Pancreas (tissue), 10 donors: ENCODE measurements at regions of chr10 and their contacts with region 1.

Region 1: GRCh38 chr10:17430647-17431355 is 23.6 kb downstream of the ST8SIA6 start:
- DNase-seq: peak in 5 of 6 donors; percentile 57 to 81 (median 68)
- ATAC-seq: peak; percentile 82 to 99 (median 92)
- H3K4me3 ChIP-seq: no peak overlapping the region
- H3K27ac ChIP-seq: no peak overlapping the region
- H3K4me1 ChIP-seq: no peaks in the 10 kb centered on the region
- H3K27me3 ChIP-seq: no peaks in the 10 kb centered on the region
- CTCF ChIP-seq: peak; percentile 80 to 89 (median 84)

Region 2: DNA sequence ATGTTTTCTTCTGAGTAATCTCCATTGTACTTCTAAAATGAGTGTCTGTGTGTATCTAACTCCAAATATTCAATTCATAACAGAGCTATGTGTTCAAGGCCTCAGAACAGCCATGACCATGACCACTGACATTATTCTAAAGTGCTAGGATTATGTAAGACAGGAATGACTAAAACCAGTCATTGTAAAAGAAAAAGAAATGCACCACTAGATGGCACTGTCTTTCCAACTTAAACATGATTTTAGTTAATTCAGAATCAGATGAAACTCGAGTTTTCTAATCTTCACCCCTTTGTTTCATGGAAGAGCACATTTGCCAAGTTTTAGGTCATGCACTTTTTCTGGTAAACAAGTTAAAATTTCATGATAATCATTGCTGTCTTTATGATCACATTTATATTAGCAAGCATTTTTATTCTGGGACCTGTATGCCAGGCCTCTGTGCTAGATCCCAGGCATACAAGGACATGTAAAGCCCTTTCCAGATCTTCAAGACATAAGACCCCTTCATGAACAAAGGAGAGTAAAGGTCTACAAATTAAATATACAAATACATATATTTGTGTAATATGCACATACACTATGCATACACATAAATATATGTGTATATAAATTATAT is 587.4 kb before region 1 on chr10:
- intact Hi-C with region 1: loop called in 1 of 3 experiments (anchors 10 kb)
- DNase-seq: no peak
- ATAC-seq: peak; percentile 77 to 99 (median 92)
- H3K4me3 ChIP-seq: no peak overlapping the region
- H3K27ac ChIP-seq: no peak overlapping the region
- H3K4me1 ChIP-seq: no peaks in the 10 kb centered on the region
- H3K27me3 ChIP-seq: no peaks in the 10 kb centered on the region
- CTCF ChIP-seq: peak; percentile 49 to 69 (median 58)

Region 3: DNA sequence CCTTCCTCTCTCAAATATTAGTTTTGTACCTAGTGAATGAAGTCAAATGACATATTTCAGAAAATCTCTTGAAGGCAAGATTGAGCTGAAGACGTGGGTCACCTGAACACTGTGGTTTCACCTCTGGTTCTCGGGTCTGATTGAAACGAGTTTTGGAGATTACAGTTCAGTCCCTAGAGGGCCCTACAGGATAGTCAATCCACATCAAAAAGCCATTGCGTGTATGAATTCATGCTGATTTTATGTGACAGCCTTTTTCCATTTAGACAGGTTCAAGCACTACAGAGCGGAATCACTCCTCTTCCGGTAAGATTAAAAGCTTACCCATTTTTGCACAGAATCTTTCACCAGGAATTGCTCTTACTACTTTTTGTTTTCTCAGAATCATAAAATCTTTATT is 140.6 kb before region 1 on chr10:
- intact Hi-C with region 1: loop called (anchors 5 to 10 kb)
- DNase-seq: peak in 1 of 6 donors; percentile 27
- ATAC-seq: peak; percentile 88 to 99 (median 96)
- H3K4me3 ChIP-seq: peak overlapping the region in 1 of 4 donors; percentile 22
- H3K27ac ChIP-seq: no peak overlapping the region
- H3K4me1 ChIP-seq: no peaks in the 10 kb centered on the region
- H3K27me3 ChIP-seq: peaks cover 0 to 5% (median 0%) of the 10 kb centered on the region in 4 donors
- CTCF ChIP-seq: peak in 3 of 4 donors; percentile 23 to 28 (median 24)

Region 4: DNA sequence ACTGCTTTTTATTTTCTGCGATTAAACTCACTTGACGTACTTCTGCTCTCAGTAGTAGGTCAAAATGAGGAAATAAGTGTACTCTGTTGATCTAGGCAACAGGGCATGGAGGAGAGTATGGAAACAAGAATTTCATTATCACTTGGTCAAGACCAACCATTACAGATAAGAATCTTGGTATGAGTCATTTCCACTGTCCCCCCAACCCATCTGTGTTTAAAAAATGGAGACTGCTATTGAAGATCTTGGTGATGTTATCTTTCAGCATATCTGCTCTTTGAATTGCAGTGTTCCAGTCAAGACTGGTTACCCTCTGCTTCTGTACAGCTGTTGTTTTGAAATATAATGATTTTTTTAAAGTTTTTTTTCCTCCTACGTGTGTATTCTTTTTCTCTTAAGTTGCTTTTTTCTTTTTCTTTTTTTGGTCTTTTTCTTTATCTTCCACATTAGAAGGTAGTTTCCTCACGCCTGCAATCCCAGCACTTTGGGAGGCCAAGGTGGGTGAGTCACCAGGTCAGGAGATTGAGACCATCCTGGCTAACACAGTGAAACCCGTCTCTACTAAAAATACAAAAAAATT is 224.9 kb after region 1 on chr10:
- intact Hi-C with region 1: no loop called
- DNase-seq: no peak
- ATAC-seq: peak in 1 of 4 donors; percentile 14
- H3K4me3 ChIP-seq: no peak overlapping the region
- H3K27ac ChIP-seq: no peak overlapping the region
- H3K4me1 ChIP-seq: peaks cover 0 to 12% (median 0%) of the 10 kb centered on the region in 3 donors
- H3K27me3 ChIP-seq: no peaks in the 10 kb centered on the region
- CTCF ChIP-seq: no peak

Region 5: GRCh38 chr10:18178854-18179483 is 748.2 kb after region 1 on chr10:
- intact Hi-C with region 1: no loop called
- DNase-seq: no peak
- ATAC-seq: peak in 3 of 4 donors; percentile 8 to 37 (median 34)
- H3K4me3 ChIP-seq: no peak overlapping the region
- H3K27ac ChIP-seq: no peak overlapping the region
- H3K4me1 ChIP-seq: peaks cover 5 to 9% (median 8%) of the 10 kb centered on the region in 3 donors
- H3K27me3 ChIP-seq: no peaks in the 10 kb centered on the region
- CTCF ChIP-seq: no peak